ENCODE measurements at regions of chr12 and their contacts with region 1.

Region 1: GRCh38 chr12:130838951-130839769 is at the start of gene STX2:
- DNase-seq: peak; percentile 80
- ATAC-seq: peak; percentile 83
- H3K4me3 ChIP-seq: peak within 1 kb of the TSS; percentile 75 to 93 (median 86)
- H3K27ac ChIP-seq: peak within 1 kb of the TSS; percentile 59
- H3K4me1 ChIP-seq: peaks cover 26% of the 10 kb centered on the region
- H3K27me3 ChIP-seq: no peaks in the 10 kb centered on the region
- CTCF ChIP-seq: peak; percentile 81
- EP300 ChIP-seq: peak in 1 of 2 experiments; percentile 34; a peak in 1 of 4 replicates
- POLR2A ChIP-seq: peak in 1 of 2 experiments; percentile 43; a peak in 1 of 4 replicates
- RAD21 ChIP-seq: peak; percentile 29; the same call in 1 of the 2 replicates
- total RNA-seq, gene STX2: 12.4 and 13.4 TPM in 2 replicates

Region 2: GRCh38 chr12:130849561-130850417 is 10.6 kb after region 1 on chr12:
- CTCF ChIA-PET with region 1: no interaction called
- POLR2A ChIA-PET with region 1: no interaction called
- in situ Hi-C with region 1: no loop called
- intact Hi-C with region 1: no loop called
- DNase-seq: peak; percentile 89
- ATAC-seq: peak; percentile 80
- H3K4me3 ChIP-seq: peak overlapping the region in 1 of 3 experiments; percentile 7; a peak in 1 of 6 replicates
- H3K27ac ChIP-seq: peak overlapping the region; percentile 61
- H3K4me1 ChIP-seq: peaks cover 74% of the 10 kb centered on the region
- H3K27me3 ChIP-seq: no peaks in the 10 kb centered on the region
- CTCF ChIP-seq: no peak
- EP300 ChIP-seq: peak in 1 of 2 experiments; percentile 31; a peak in 2 of 4 replicates
- POLR2A ChIP-seq: no peak
- RAD21 ChIP-seq: no peak

Region 3: DNA sequence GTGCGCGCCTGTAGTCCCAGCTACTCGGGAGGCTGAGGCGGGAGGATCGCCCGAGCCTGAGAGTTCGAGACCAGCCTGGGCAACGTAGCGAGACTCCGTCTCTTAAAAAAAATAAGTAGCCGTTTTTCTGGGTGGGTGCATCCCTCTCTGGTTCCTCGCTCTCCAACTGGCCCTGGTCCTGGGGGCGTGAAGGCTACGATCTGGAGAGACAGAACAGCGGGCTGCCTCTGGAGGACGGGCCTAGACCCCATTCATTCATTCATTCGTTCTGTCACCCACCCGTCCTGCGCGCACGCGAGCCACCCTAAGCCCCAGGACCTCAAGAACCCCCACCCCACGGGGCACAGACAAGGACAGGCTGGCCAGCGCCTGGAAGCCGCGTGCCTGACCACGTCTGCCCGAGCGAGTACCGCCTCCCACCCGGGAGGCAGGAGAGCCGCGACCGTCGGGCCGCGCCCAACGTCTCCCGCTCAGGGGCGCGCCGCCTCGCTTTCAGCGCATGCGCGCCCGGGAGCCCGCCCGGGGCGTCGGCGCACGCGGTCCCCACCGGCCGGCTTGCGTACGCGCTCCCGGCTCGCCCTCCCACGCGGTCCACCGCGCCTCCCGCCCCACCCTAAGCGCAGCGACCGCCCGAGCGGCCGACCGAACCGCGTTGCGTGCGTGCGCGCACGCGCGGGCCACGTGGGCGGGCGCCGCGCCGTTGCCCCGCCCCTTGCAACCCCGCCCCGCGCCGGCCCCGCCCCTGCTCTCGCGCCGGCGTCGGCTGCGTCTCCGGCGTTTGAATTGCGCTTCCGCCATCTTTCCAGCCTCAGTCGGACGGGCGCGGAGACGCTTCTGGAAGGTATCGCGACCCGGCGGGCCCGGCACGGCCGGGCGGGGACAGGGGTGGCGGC is 32.4 kb after region 1 on chr12 and contains the start of gene RAN:
- CTCF ChIA-PET with region 1: interaction called, 10 read pairs
- POLR2A ChIA-PET with region 1: interaction called, 3 read pairs
- in situ Hi-C with region 1: loop called (anchors 5 kb)
- intact Hi-C with region 1: loop called (anchors 2 kb)
- DNase-seq: peak; percentile 78
- ATAC-seq: peak; percentile 82
- H3K4me3 ChIP-seq: peak within 1 kb of the TSS; percentile 76 to 82 (median 78)
- H3K27ac ChIP-seq: peak within 1 kb of the TSS; percentile 93
- H3K4me1 ChIP-seq: peaks cover 71% of the 10 kb centered on the region
- H3K27me3 ChIP-seq: no peaks in the 10 kb centered on the region; a peak in 1 of 5 replicates
- CTCF ChIP-seq: no peak; the same call in 1 of the 2 replicates
- EP300 ChIP-seq: no peak
- POLR2A ChIP-seq: peak; percentile 62 to 75
- RAD21 ChIP-seq: peak; percentile 33; the same call in 1 of the 2 replicates
- total RNA-seq, gene RAN: 1,630 and 2,526 TPM in 2 replicates

Region 4: DNA sequence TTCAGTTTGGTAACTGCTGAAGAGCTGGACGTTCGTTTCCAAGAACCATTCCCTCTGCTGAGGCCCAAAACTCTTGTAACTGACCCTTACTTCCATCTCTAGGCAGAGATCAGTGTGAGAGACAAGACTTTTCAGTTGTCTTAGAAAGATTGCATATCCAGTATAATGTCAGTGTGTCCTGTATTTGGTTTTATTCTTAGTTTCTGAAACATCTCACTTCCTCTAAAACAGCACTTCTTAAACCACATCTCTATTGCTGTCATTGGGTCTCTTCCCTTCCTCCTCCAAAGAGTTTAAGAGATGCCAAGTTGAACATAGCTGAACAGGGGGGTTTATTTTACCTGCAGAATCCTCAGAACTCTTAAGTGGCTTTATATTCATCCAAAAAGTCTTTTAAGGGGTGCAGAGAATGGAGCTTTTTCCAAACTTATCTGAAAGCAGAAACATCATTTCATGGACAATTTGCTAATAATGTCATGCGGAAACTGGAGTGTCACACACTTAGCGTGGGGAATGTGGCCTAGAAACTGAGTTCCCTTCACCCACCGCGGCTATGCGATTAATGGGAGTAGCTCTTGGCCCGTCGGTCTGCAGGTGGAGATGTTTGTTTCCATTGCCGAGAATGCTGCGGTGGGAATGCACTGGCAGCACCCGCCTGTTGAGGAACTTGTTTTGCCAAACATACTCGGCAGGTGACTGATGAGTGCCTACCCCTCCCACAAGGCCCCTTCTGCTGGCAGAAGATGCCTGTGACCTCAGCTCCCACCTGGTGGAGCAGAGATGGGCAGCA is 262.7 kb after region 1 on chr12:
- CTCF ChIA-PET with region 1: no interaction called
- POLR2A ChIA-PET with region 1: no interaction called
- in situ Hi-C with region 1: no loop called
- intact Hi-C with region 1: no loop called
- DNase-seq: no peak
- ATAC-seq: no peak
- H3K4me3 ChIP-seq: no peak overlapping the region
- H3K27ac ChIP-seq: no peak overlapping the region
- H3K4me1 ChIP-seq: peaks cover 6% of the 10 kb centered on the region; the same call in 1 of the 2 replicates
- H3K27me3 ChIP-seq: peaks cover 0 to 1% of the 10 kb centered on the region in 2 experiments; a peak in 1 of 5 replicates
- CTCF ChIP-seq: no peak
- EP300 ChIP-seq: no peak
- POLR2A ChIP-seq: no peak
- RAD21 ChIP-seq: no peak